MCF 10A (cell line): ENCODE measurements at regions of chr2 and their contacts with region 1.

Region 1: GRCh38 chr2:46657042-46657504 is 177.7 kb downstream of the TMEM247 start:
- DNase-seq: peak; percentile 44
- H3K4me3 Mint-ChIP-seq: no peak overlapping the region
- H3K27ac Mint-ChIP-seq: no peak overlapping the region
- H3K4me1 Mint-ChIP-seq: peaks cover 11% of the 10 kb centered on the region
- H3K27me3 Mint-ChIP-seq: no peaks in the 10 kb centered on the region
- CTCF ChIP-seq: peak; percentile 21

Region 2: GRCh38 chr2:46632349-46632748 is 24.7 kb before region 1 on chr2:
- CTCF ChIA-PET with region 1: interaction called, 65 read pairs
- POLR2A ChIA-PET with region 1: no interaction called
- intact Hi-C with region 1: no loop called
- DNase-seq: peak; percentile 68
- H3K4me3 Mint-ChIP-seq: no peak overlapping the region
- H3K27ac Mint-ChIP-seq: no peak overlapping the region
- H3K4me1 Mint-ChIP-seq: no peaks in the 10 kb centered on the region
- H3K27me3 Mint-ChIP-seq: no peaks in the 10 kb centered on the region
- CTCF ChIP-seq: peak; percentile 56

Region 3: GRCh38 chr2:46674488-46674887 is 17.4 kb after region 1 on chr2:
- CTCF ChIA-PET with region 1: interaction called, 10 read pairs
- POLR2A ChIA-PET with region 1: interaction called, 3 read pairs
- intact Hi-C with region 1: no loop called
- DNase-seq: no peak
- H3K4me3 Mint-ChIP-seq: no peak overlapping the region
- H3K27ac Mint-ChIP-seq: no peak overlapping the region
- H3K4me1 Mint-ChIP-seq: peaks cover 7% of the 10 kb centered on the region
- H3K27me3 Mint-ChIP-seq: no peaks in the 10 kb centered on the region
- CTCF ChIP-seq: no peak

Region 4: GRCh38 chr2:46776687-46777327 is 119.7 kb after region 1 on chr2:
- CTCF ChIA-PET with region 1: interaction called, 4 read pairs
- POLR2A ChIA-PET with region 1: no interaction called
- intact Hi-C with region 1: loop called (anchors 2 kb)
- DNase-seq: peak; percentile 81
- H3K4me3 Mint-ChIP-seq: no peak overlapping the region
- H3K27ac Mint-ChIP-seq: no peak overlapping the region
- H3K4me1 Mint-ChIP-seq: peaks cover 14% of the 10 kb centered on the region
- H3K27me3 Mint-ChIP-seq: no peaks in the 10 kb centered on the region
- CTCF ChIP-seq: peak; percentile 55

Region 5: GRCh38 chr2:46887028-46887885 is 230.2 kb after region 1 on chr2:
- CTCF ChIA-PET with region 1: interaction called, 50 read pairs
- POLR2A ChIA-PET with region 1: no interaction called
- intact Hi-C with region 1: no loop called
- DNase-seq: no peak
- H3K4me3 Mint-ChIP-seq: no peak overlapping the region
- H3K27ac Mint-ChIP-seq: no peak overlapping the region
- H3K4me1 Mint-ChIP-seq: peaks cover 6% of the 10 kb centered on the region
- H3K27me3 Mint-ChIP-seq: no peaks in the 10 kb centered on the region
- CTCF ChIP-seq: no peak